Gastrocnemius medialis (tissue), 4 donors: ENCODE measurements at regions of chr3 and their contacts with region 1.

Region 1: DNA sequence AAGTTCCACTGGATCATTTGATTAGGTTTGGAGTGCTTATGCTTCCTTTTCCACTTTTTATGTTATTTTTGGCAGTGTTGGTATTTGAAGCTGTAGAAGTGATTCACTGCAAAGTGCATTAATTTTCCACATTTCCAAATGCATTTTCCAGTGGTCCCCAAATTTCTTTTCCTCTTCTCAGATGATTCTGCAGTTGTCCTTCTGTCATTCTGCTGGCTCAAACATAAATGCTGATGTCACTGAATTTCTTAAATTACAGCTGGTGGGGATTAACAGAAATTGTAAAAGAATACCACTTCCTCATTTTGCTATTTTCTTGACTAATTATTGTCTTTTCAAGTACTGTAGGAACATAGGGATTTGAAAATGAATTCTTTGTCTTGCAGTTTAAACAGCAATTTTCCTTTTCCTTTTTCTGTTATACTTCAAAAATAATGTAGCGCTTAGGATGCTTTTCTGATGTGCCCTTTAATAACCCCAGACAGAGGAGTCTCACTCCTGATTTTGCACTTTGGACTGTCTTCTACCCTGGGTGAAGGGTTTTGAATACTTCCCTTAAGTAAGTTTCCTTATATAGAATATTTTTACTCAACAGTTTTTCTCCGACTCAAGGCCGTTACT is 25.0 kb downstream of the MITF start:
- DNase-seq: no peak
- ATAC-seq: no peak
- H3K4me3 ChIP-seq: peak overlapping the region in 3 of 4 donors; percentile 16 to 31 (median 22)
- H3K27ac ChIP-seq: peak overlapping the region; percentile 45 to 70 (median 54)
- H3K4me1 ChIP-seq: peaks cover 83 to 86% of the 10 kb centered on the region in 2 donors
- H3K27me3 ChIP-seq: no peaks in the 10 kb centered on the region
- CTCF ChIP-seq: no peak
- POLR2A ChIP-seq: no peak

Region 2: DNA sequence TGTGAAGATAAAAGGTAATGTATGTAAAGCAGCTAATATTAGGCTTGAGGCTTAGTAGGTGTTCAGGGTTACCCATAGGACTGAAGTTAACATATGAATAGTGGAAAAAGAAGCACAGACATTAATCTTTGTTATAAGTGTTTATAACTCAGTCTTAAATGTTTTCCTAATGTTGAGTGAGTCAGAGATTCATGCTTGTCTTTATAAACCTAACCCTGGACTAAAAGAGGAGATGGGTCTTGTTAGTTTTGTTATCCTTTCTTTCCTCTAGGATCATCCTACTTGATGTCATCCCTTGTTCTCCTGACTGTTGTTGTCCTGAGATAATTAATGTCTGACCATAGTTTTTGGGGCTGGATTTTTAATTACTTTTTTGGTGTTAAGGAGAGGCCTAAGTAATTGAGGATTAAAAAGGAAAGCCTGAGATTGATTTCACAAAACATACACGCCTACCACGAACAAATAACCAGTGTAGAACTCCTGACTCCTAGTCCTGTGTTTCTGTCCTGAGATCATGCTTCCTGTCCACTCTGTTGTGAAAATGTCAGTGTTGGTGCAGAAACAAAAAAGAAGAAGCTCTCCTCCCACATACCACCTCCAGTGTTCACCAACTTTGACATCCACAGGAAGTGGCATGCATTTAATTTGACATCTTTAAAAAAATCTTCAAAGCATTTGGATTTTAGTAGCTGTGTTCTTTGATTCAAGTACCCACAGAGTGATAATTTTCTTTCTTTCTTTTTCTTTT is 16.5 kb before region 1 on chr3:
- in situ Hi-C with region 1: no loop called
- intact Hi-C with region 1: loop called (anchors 2 kb)
- DNase-seq: no peak
- ATAC-seq: no peak
- H3K4me3 ChIP-seq: no peak overlapping the region
- H3K27ac ChIP-seq: peak overlapping the region; percentile 48 to 79 (median 72)
- H3K4me1 ChIP-seq: peaks cover 95% of the 10 kb centered on the region in 2 donors
- H3K27me3 ChIP-seq: no peaks in the 10 kb centered on the region
- CTCF ChIP-seq: no peak
- POLR2A ChIP-seq: no peak

Region 3: DNA sequence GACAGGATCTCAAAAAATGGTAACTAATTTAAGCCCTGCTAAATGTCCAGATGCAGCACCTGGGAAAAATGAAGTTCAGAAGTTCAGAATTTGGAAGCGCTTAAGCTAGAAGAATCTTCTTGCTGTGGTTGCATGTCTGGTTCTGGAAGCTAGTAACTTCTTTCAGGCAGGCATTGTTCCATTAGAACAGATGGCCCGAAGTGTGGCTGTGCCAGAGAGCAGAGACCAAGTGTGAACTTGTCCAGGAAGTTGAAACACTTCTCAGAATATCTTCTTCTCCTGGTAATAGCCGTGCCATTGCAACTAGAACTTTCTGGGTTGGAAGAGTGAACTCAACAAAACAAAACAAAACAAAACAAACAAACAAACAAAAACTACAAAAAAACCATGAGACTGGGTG is 55.1 kb after region 1 on chr3:
- in situ Hi-C with region 1: no loop called
- intact Hi-C with region 1: no loop called
- DNase-seq: peak; percentile 19 to 55
- ATAC-seq: peak; percentile 82 to 96
- H3K4me3 ChIP-seq: no peak overlapping the region
- H3K27ac ChIP-seq: peak overlapping the region in 2 of 4 donors; percentile 13 to 44
- H3K4me1 ChIP-seq: peaks cover 76% of the 10 kb centered on the region in 2 donors
- H3K27me3 ChIP-seq: no peaks in the 10 kb centered on the region
- CTCF ChIP-seq: no peak
- POLR2A ChIP-seq: no peak

Region 4: GRCh38 chr3:69948246-69948862 is 184.1 kb after region 1 on chr3:
- in situ Hi-C with region 1: no loop called
- intact Hi-C with region 1: no loop called
- DNase-seq: no peak
- ATAC-seq: no peak
- H3K4me3 ChIP-seq: no peak overlapping the region
- H3K27ac ChIP-seq: no peak overlapping the region
- H3K4me1 ChIP-seq: no peaks in the 10 kb centered on the region
- H3K27me3 ChIP-seq: no peaks in the 10 kb centered on the region
- CTCF ChIP-seq: peak; percentile 15 to 65 (median 39)
- POLR2A ChIP-seq: no peak